ENCODE measurements at regions of chr3 and their contacts with region 1.

Region 1: DNA sequence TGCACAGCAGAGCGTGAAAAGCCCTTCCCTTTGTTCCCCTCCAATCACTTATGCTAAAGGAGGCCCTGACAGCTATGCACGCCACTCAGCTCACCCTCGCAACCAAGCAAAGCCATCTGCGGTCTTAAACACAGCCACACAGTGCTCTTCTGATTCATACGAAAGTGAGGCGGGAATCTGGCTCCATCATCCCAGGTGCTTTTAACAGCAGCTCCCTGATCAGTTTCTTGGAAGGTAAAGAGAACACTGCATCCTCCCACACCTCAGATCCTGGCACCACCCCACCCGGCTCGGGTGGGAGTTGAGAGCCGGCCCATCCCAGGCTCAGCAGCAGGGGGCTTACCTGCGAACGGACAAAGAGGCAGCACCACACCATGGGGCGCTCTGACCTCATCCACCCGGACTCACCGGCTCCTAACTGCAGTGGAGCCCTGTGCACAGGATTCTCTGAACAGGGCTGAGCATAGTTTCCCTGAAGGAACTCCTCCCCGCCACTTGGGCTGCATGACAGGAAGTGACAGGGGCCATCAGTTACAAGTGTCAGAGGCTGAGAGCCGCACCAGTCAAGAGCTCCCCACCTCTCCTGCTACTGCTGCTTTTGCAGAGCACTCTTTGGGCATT is 114.3 kb upstream of the ARHGEF3 start:
- DNase-seq: peak; percentile 44 to 88 (median 75)
- ATAC-seq: peak; percentile 89
- H3K4me3 ChIP-seq: peak overlapping the region; percentile 75 to 78
- H3K4me3 Mint-ChIP-seq: peak overlapping the region; percentile 92
- H3K27ac ChIP-seq: peak overlapping the region; percentile 72 to 88
- H3K27ac Mint-ChIP-seq: peak overlapping the region; percentile 91
- H3K4me1 ChIP-seq: peaks cover 57% of the 10 kb centered on the region
- H3K4me1 Mint-ChIP-seq: peaks cover 77% of the 10 kb centered on the region
- H3K27me3 ChIP-seq: no peaks in the 10 kb centered on the region
- H3K27me3 Mint-ChIP-seq: no peaks in the 10 kb centered on the region
- CTCF ChIP-seq: no peak

Region 2: GRCh38 chr3:56682462-56683121 is 233.5 kb before region 1 on chr3:
- CTCF ChIA-PET with region 1: no interaction called
- POLR2A ChIA-PET with region 1: interaction called, 7 read pairs
- intact Hi-C with region 1: loop called in 1 of 2 experiments (anchors 5 kb)
- DNase-seq: peak; percentile 52 to 88 (median 77)
- ATAC-seq: peak; percentile 69
- H3K4me3 ChIP-seq: peak overlapping the region; percentile 89 to 91
- H3K4me3 Mint-ChIP-seq: peak overlapping the region; percentile 95
- H3K27ac ChIP-seq: peak overlapping the region; percentile 98
- H3K27ac Mint-ChIP-seq: peak overlapping the region; percentile 99
- H3K4me1 ChIP-seq: peaks cover 47% of the 10 kb centered on the region
- H3K4me1 Mint-ChIP-seq: peaks cover 39% of the 10 kb centered on the region
- H3K27me3 ChIP-seq: no peaks in the 10 kb centered on the region
- H3K27me3 Mint-ChIP-seq: no peaks in the 10 kb centered on the region
- CTCF ChIP-seq: no peak

Region 3: DNA sequence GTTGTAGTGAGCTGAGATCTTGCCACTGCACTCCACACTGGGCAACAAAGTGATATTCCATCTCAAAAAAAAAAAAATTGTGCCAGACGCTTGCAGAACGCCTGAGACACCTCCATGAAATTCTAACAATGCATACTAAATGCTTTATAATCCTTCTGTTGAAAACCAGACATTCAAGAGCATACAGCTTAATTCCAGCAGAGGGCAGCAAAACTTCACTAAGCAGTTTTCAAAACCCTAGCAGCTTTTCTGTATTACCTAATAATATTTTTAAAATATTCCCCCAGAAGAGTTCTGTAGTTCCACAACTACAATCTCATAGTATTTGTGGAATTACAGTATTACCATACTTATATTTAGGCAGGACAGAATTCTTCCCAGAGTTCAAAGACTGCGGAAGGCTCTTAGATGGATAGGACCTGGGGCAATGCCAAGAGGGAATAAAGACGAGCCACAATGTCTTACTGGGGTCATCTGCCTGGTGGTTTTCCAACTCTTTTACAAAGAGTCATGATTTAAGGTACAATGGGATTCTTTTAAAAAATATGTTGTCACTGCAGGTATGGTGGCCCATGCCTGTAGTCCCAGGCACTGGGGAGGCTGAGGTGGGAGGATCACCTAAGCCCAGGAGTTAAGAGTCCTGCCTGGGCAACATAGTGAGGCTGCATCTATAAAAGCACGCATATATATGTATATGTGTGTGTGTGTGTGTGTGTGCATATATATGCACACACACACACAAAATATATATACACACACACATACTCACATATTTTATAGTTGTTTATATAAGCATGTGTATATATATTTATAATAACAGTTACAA is 213.4 kb before region 1 on chr3:
- CTCF ChIA-PET with region 1: interaction called, 11 read pairs
- POLR2A ChIA-PET with region 1: no interaction called
- intact Hi-C with region 1: loop called (anchors 2 to 5 kb)
- DNase-seq: peak in 7 of 9 experiments; percentile 37 to 86 (median 60)
- ATAC-seq: peak; percentile 79
- H3K4me3 ChIP-seq: no peak overlapping the region
- H3K4me3 Mint-ChIP-seq: no peak overlapping the region
- H3K27ac ChIP-seq: no peak overlapping the region
- H3K27ac Mint-ChIP-seq: no peak overlapping the region
- H3K4me1 ChIP-seq: peaks cover 20% of the 10 kb centered on the region
- H3K4me1 Mint-ChIP-seq: peaks cover 22% of the 10 kb centered on the region
- H3K27me3 ChIP-seq: no peaks in the 10 kb centered on the region
- H3K27me3 Mint-ChIP-seq: no peaks in the 10 kb centered on the region
- CTCF ChIP-seq: peak; percentile 86

Region 4: GRCh38 chr3:56887402-56888025 is 28.6 kb before region 1 on chr3:
- CTCF ChIA-PET with region 1: interaction called, 4 read pairs
- POLR2A ChIA-PET with region 1: interaction called, 7 read pairs
- intact Hi-C with region 1: loop called in 1 of 2 experiments (anchors 2 kb)
- DNase-seq: peak in 7 of 9 experiments; percentile 10 to 59 (median 37)
- ATAC-seq: peak; percentile 51
- H3K4me3 ChIP-seq: no peak overlapping the region
- H3K4me3 Mint-ChIP-seq: peak overlapping the region; percentile 61
- H3K27ac ChIP-seq: peak overlapping the region in 1 of 2 experiments; percentile 56
- H3K27ac Mint-ChIP-seq: peak overlapping the region; percentile 81
- H3K4me1 ChIP-seq: peaks cover 68% of the 10 kb centered on the region
- H3K4me1 Mint-ChIP-seq: peaks cover 88% of the 10 kb centered on the region
- H3K27me3 ChIP-seq: no peaks in the 10 kb centered on the region
- H3K27me3 Mint-ChIP-seq: no peaks in the 10 kb centered on the region
- CTCF ChIP-seq: no peak

Region 5: DNA sequence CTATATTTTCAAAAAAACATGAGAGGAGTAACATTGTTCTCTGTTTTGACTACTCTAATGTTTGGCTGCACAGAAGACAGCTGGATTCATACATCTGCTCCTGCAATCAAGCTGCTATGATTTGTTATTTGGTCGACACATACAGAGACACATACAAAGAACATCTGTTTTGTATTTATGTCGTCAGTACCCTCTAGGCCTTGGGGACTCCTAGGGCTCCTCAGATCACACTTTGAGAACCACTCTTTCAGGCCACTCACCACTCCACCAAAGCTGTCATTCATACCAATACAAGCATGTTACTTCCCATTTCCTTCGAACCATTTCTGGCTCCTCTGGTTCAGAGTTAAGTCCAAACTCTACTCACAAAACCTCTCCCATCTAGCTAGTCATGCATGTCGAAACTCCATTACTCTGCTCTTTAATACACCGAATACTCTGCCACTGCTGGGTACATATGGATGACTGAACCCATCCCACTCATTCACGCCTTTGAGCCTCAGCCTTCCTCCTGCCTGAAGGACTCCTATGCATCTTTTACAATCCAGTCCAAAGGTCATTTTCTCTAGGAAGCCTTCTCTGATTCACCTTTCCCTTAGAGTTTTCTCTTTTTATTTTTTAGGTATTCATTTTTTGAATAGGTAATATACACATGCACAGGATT is 11.4 kb before region 1 on chr3:
- CTCF ChIA-PET with region 1: interaction called, 12 read pairs
- POLR2A ChIA-PET with region 1: interaction called, 6 read pairs
- intact Hi-C with region 1: no loop called
- DNase-seq: no peak
- ATAC-seq: no peak
- H3K4me3 ChIP-seq: no peak overlapping the region
- H3K4me3 Mint-ChIP-seq: no peak overlapping the region
- H3K27ac ChIP-seq: no peak overlapping the region
- H3K27ac Mint-ChIP-seq: no peak overlapping the region
- H3K4me1 ChIP-seq: peaks cover 19% of the 10 kb centered on the region
- H3K4me1 Mint-ChIP-seq: peaks cover 72% of the 10 kb centered on the region
- H3K27me3 ChIP-seq: no peaks in the 10 kb centered on the region
- H3K27me3 Mint-ChIP-seq: no peaks in the 10 kb centered on the region
- CTCF ChIP-seq: no peak

Measured in CD8-positive, alpha-beta T cell (primary cell).